AG04449 (cell line): ENCODE measurements at regions of chr1 and their contacts with region 1.

Region 1: DNA sequence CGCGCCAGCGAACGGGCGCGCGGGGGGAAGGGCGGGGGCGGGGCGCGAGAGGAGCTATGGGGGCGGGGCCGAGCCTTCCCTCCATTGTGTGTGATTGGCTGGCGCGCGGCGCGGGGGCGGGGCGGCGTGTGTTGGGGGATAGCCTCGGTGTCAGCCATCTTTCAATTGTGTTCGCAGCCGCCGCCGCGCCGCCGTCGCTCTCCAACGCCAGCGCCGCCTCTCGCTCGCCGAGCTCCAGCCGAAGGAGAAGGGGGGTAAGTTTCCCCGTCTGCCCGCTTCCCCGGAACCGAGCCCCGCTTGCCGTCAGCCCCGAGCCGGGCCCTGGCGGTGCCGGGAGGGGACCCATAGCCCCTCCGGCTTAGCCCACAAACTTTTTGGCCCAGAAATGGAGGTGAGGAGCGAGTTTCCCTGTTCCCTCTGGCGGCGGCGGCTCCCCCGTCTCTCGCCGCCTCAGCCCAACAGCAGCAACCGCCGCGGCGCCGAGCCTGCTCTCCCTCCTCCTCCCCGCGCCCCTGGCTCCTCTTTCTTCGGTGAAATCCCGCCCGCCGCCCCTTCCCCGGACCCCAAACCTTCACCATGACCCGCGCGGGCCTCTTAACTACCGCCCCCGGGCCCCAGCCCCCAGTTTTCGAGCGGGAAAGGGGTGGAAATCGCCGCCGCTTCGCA is at the start of gene H3-3A:
- DNase-seq: peak; percentile 38
- H3K4me3 ChIP-seq: peak within 1 kb of the TSS; percentile 80
- CTCF ChIP-seq: no peak

Region 2: GRCh38 chr1:225999227-225999911 is 63.3 kb before region 1 on chr1 and contains the start of gene SDE2:
- CTCF ChIA-PET with region 1: interaction called, 8 read pairs
- POLR2A ChIA-PET with region 1: interaction called, 12 read pairs
- DNase-seq: peak; percentile 85
- H3K4me3 ChIP-seq: peak within 1 kb of the TSS; percentile 97
- CTCF ChIP-seq: no peak

Region 3: GRCh38 chr1:226083302-226084101 is 20.8 kb after region 1 on chr1:
- CTCF ChIA-PET with region 1: interaction called, 151 read pairs
- POLR2A ChIA-PET with region 1: interaction called, 11 read pairs
- DNase-seq: no peak
- H3K4me3 ChIP-seq: peak overlapping the region; percentile 74
- CTCF ChIP-seq: peak; percentile 9

Region 4: GRCh38 chr1:226100436-226101391 is 38.0 kb after region 1 on chr1:
- CTCF ChIA-PET with region 1: interaction called, 27 read pairs
- POLR2A ChIA-PET with region 1: interaction called, 3 read pairs
- DNase-seq: no peak
- H3K4me3 ChIP-seq: peak overlapping the region; percentile 38
- CTCF ChIP-seq: no peak

Region 5: DNA sequence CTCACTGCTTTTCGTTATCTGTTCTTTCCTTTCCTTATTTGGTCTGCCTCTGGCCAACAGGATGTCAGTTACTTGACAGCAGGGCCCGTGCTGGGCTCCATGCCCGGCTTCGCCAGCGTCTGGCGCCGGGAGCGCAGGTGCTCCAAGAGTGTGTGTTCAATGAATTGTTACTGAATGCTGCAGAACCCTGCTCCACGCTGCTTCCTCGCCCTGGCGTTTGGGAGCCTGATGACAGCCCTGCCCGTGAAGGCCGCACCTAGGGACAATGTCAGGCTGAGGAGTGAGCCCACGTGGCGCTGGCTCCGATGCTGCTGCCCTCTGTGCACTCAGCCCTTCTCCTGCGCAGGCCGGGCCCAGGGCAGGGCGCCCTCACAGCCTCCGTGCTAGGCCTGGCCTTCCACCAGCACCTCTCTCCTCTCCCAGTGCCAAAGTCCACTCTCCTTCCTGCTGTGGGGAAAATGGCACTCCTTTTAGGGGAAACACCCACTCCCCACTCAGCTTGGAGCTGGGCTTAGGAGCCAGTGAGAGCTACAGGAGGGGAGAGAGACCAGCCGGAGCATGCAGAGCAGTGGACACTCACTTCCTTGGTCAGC is 72.5 kb after region 1 on chr1:
- CTCF ChIA-PET with region 1: interaction called, 10 read pairs
- POLR2A ChIA-PET with region 1: no interaction called
- DNase-seq: no peak
- H3K4me3 ChIP-seq: no peak overlapping the region
- CTCF ChIP-seq: no peak